HEK293 (cell line): ENCODE measurements at regions of chr19 and their contacts with region 1.

Region 1: DNA sequence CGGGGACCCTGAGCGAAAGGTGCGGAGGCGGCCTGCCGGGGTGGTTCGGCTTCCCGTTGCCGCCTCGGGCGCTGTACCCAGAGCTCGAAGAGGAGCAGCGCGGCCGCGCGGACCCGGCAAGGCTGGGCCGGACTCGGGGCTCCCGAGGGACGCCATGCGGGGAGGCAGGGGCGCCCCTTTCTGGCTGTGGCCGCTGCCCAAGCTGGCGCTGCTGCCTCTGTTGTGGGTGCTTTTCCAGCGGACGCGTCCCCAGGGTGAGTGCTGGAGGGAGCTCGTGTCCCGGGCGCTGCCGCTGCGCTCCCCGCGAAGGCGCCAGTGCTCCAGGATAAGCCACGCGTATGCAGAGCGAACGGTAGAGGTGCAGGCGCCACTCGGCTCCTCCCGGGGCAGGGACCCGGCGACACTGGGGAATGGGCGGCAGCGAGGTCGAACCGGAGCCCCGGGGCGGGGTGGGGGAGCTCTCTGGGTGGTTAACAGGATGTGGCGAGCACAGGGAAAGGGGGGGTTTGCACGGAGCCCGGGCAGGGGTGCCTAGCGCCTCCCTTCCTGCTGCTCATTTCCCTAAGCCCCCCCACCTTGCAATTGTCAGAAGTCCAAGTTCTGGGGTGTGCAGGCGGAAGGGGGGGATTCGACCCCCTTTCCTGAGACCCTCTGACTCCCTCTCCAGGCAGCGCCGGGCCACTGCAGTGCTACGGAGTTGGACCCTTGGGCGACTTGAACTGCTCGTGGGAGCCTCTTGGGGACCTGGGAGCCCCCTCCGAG is at the start of gene IL27RA:
- H3K4me3 ChIP-seq: peak within 1 kb of the TSS; percentile 64
- H3K27ac ChIP-seq: peak within 1 kb of the TSS; percentile 61; the same call in 1 of the 2 replicates
- H3K4me1 ChIP-seq: no peaks in the 10 kb centered on the region
- CTCF ChIP-seq: peak; percentile 89

Region 2: DNA sequence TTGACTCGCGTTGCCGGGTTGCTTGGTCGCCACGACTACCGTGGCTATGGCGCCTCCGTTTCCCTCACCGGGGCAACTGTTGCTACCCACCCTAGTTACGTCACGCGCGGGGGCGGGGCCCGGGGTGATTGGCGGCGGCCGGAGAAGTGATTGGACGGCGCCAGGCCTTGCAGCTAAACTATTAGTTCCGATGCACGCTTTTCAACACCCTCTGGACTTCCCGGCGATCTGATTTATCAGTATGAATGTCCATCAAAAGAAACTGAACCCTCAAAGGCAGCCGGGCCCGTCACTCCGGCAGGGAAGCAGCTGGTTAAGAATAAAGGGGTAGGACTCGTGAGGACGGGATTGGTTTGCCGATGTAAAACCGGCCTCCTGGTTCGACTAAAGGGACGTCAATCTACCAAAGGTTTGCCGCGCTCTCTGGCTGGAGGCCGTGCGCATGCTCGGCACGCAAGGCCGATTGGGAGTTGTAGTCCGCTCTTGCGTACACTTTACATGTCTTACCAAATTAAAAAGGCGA is 25.6 kb before region 1 on chr19 and contains the start of gene RFX1:
- CTCF ChIA-PET with region 1: interaction called, 4 read pairs
- POLR2A ChIA-PET with region 1: interaction called, 11 read pairs
- H3K4me3 ChIP-seq: peak within 1 kb of the TSS; percentile 92
- H3K27ac ChIP-seq: peak within 1 kb of the TSS; percentile 89
- H3K4me1 ChIP-seq: no peaks in the 10 kb centered on the region
- CTCF ChIP-seq: no peak

Region 3: DNA sequence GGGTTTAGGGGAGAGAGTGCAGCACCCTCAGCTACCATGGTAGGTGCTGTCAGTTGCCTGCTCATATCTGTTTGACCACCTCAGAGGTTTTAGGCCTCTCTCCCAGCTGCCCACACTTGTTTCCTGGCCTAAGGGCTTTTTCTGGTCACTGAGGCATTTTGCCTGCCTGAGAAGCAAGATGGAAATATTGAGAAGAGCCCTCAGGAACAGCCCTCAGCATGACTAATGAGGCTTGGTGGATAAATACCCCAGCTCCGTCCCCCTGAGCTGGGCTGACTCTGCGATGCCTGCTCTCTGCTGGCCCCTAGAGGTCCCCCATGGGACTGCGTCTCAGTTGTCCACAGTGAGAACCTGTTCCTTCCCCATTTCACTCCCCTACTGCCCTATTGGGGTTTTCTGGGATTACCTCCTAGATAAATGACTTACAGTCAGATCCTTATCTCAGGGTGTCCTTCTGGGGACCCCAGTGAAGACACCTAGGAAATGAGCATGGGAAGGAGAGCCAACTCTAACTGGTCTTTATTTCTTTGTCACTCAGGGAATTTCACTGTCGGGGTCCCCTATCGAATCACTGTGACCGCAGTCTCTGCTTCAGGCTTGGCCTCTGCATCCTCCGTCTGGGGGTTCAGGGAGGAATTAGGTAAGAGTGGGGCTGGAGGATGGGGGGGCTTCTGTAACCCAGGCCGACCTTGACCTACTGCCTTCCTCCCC is 16.7 kb after region 1 on chr19:
- CTCF ChIA-PET with region 1: interaction called, 29 read pairs
- POLR2A ChIA-PET with region 1: interaction called, 3 read pairs
- H3K4me3 ChIP-seq: no peak overlapping the region
- H3K27ac ChIP-seq: no peak overlapping the region
- H3K4me1 ChIP-seq: no peaks in the 10 kb centered on the region
- CTCF ChIP-seq: peak; percentile 34

Region 4: GRCh38 chr19:14107581-14108461 is 75.9 kb after region 1 on chr19:
- CTCF ChIA-PET with region 1: no interaction called
- POLR2A ChIA-PET with region 1: no interaction called
- H3K4me3 ChIP-seq: no peak overlapping the region
- H3K27ac ChIP-seq: no peak overlapping the region
- H3K4me1 ChIP-seq: peaks cover 3% of the 10 kb centered on the region
- CTCF ChIP-seq: no peak